Activated naive CD4-positive, alpha-beta T cell treated with anti-CD3 and anti-CD28 coated beads for 36 hours (primary cell): ENCODE measurements at regions of chr15 and their contacts with region 1.

Region 1: GRCh38 chr15:36501063-36501678 is 78.3 kb upstream of the CDIN1 start:
- DNase-seq: peak; percentile 34
- H3K4me3 Mint-ChIP-seq: no peak overlapping the region
- H3K27ac Mint-ChIP-seq: no peak overlapping the region
- H3K4me1 Mint-ChIP-seq: no peaks in the 10 kb centered on the region
- H3K27me3 Mint-ChIP-seq: peaks cover 9% of the 10 kb centered on the region

Region 2: DNA sequence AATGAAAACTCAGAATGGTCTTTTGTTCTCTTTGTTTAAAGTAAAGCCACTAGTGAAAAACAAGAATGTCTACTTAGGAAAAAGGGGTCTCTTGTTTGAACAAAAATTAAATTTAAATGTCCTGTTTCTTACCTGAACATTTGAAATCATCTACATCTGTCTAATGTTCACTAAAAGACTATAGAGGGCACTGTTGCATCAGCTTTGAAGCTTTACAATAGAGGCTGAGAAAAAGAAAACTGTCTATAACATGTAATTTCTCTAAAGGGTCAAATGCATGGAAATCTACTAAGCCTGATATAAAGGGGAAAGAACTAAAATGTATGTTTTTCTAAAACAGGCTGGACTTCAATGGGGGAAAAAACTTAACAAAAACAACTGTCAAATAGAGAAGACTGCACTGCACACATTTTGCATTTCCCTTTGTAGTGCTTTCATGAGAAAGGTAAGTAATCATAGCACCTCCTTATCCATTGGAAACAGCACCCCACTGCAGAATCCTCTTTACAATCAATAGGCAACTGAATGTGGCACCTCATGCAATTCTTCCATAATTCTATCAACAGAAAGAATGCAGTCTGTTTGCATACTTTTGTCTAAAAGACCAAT is 981.5 kb before region 1 on chr15:
- CTCF ChIA-PET with region 1: no interaction called
- intact Hi-C with region 1: loop called (anchors 5 kb)
- DNase-seq: no peak
- H3K4me3 Mint-ChIP-seq: no peak overlapping the region
- H3K27ac Mint-ChIP-seq: no peak overlapping the region
- H3K4me1 Mint-ChIP-seq: peaks cover 6% of the 10 kb centered on the region
- H3K27me3 Mint-ChIP-seq: no peaks in the 10 kb centered on the region

Region 3: DNA sequence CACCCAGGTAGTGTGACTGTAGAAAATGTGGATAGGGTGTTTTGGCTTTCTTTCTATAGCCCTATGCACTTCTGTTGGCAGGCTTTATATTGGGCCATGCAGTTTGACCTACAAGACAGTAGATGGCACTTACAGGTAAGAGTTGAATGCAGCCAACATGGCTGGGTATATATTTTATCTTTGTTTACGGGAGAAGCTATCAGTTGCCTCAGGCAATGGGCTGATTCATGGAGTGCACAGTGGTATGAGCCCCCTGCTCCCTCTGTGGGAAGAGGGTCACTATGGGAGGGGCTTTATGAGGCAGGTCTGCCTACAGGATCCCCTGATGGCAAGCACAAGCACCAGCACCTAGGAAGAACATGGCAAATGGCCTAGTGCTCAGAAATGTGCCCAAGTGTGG is 223.0 kb before region 1 on chr15:
- CTCF ChIA-PET with region 1: no interaction called
- intact Hi-C with region 1: no loop called
- DNase-seq: no peak
- H3K4me3 Mint-ChIP-seq: no peak overlapping the region
- H3K27ac Mint-ChIP-seq: no peak overlapping the region
- H3K4me1 Mint-ChIP-seq: no peaks in the 10 kb centered on the region
- H3K27me3 Mint-ChIP-seq: no peaks in the 10 kb centered on the region

Region 4: GRCh38 chr15:36389107-36389506 is 112.1 kb before region 1 on chr15:
- CTCF ChIA-PET with region 1: no interaction called
- intact Hi-C with region 1: no loop called
- DNase-seq: no peak
- H3K4me3 Mint-ChIP-seq: no peak overlapping the region
- H3K27ac Mint-ChIP-seq: no peak overlapping the region
- H3K4me1 Mint-ChIP-seq: no peaks in the 10 kb centered on the region
- H3K27me3 Mint-ChIP-seq: peaks cover 1% of the 10 kb centered on the region

Region 5: DNA sequence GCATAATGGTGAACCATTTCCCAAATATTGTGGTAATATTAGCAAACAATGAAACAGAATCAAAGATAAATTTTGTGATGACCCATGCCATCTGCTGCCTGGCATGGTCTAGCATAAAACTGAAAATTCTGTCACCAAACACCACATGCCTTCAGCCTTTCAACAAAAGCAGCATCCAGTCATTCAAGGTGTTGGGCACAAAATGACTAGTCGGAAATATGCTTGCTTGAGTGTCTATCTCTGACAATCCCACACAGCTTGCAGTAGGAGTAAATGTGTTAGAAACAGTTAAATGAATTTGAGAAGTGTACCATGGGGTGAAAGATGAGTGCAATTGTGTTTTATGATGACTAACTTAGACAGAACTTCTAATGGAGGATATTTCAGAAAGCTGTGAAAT is 16.6 kb after region 1 on chr15:
- CTCF ChIA-PET with region 1: no interaction called
- intact Hi-C with region 1: no loop called
- DNase-seq: no peak
- H3K4me3 Mint-ChIP-seq: no peak overlapping the region
- H3K27ac Mint-ChIP-seq: no peak overlapping the region
- H3K4me1 Mint-ChIP-seq: no peaks in the 10 kb centered on the region
- H3K27me3 Mint-ChIP-seq: peaks cover 15% of the 10 kb centered on the region

Region 6: GRCh38 chr15:36550650-36551049 is 49.5 kb after region 1 on chr15:
- CTCF ChIA-PET with region 1: no interaction called
- intact Hi-C with region 1: no loop called
- DNase-seq: no peak
- H3K4me3 Mint-ChIP-seq: no peak overlapping the region
- H3K27ac Mint-ChIP-seq: no peak overlapping the region
- H3K4me1 Mint-ChIP-seq: no peaks in the 10 kb centered on the region
- H3K27me3 Mint-ChIP-seq: peaks cover 19% of the 10 kb centered on the region

Region 7: GRCh38 chr15:36567445-36567844 is 66.3 kb after region 1 on chr15:
- CTCF ChIA-PET with region 1: no interaction called
- intact Hi-C with region 1: loop called (anchors 10 kb)
- DNase-seq: no peak
- H3K4me3 Mint-ChIP-seq: no peak overlapping the region
- H3K27ac Mint-ChIP-seq: no peak overlapping the region
- H3K4me1 Mint-ChIP-seq: no peaks in the 10 kb centered on the region
- H3K27me3 Mint-ChIP-seq: peaks cover 23% of the 10 kb centered on the region

Region 8: DNA sequence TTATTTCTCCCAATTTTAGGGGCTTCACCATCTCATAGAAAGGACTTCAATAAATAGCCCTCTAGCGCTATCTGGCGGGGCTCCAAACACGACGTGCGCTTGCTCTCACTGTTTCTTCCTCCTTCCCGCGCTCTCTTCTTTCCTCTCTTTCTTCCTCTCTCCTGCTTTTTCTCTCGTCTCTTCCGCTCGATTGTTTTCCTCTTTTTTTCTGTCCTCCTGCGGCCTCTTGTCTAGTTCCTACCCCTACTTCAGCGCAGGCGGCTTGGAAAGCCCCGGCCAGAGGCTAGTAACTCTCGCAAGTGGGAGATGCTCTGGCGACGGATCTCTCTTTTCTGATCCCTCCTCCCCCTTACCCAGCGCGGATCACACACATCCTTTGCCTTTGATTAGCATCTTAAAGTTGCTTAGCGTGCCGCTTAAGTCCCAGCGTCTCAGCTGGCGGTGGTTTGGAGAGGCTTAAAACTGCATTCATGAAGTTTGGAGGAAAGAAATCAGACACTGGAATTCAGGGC is 605.4 kb after region 1 on chr15:
- CTCF ChIA-PET with region 1: no interaction called
- intact Hi-C with region 1: loop called (anchors 1 kb)
- DNase-seq: peak; percentile 30
- H3K4me3 Mint-ChIP-seq: no peak overlapping the region
- H3K27ac Mint-ChIP-seq: no peak overlapping the region
- H3K4me1 Mint-ChIP-seq: peaks cover 26% of the 10 kb centered on the region
- H3K27me3 Mint-ChIP-seq: peaks cover 89% of the 10 kb centered on the region

Region 9: GRCh38 chr15:37880009-37880834 is 1379.1 kb after region 1 on chr15:
- CTCF ChIA-PET with region 1: no interaction called
- intact Hi-C with region 1: loop called (anchors 1 kb)
- DNase-seq: peak; percentile 6
- H3K4me3 Mint-ChIP-seq: no peak overlapping the region
- H3K27ac Mint-ChIP-seq: no peak overlapping the region
- H3K4me1 Mint-ChIP-seq: no peaks in the 10 kb centered on the region
- H3K27me3 Mint-ChIP-seq: peaks cover 9% of the 10 kb centered on the region